ENCODE measurements at regions of chr16 and their contacts with region 1.

Region 1: DNA sequence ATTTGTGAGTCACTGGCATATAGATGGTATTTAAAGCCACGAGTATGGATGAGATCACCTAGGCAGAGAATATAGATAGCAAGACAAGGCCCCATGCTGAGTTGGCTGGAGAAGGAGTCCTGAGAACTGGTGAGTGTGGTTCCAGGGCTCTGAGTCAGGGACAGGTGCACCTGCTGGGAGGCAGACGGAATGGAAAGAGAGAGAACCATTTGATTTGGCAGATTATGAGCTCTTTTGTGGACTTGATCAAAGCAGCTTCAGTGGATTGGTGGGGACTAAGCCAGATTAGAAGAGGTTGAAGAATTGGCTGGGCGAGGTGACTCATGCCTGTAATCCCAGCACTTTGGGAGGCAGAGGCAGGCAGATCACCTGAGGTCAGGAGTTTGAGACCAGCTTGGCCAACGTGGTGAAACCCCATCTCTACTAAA is 4.3 kb upstream of the C16orf92 start:
- H3K4me3 ChIP-seq: no peak overlapping the region
- H3K27ac ChIP-seq: no peak overlapping the region
- H3K4me1 ChIP-seq: no peaks in the 10 kb centered on the region
- CTCF ChIP-seq: no peak

Region 2: DNA sequence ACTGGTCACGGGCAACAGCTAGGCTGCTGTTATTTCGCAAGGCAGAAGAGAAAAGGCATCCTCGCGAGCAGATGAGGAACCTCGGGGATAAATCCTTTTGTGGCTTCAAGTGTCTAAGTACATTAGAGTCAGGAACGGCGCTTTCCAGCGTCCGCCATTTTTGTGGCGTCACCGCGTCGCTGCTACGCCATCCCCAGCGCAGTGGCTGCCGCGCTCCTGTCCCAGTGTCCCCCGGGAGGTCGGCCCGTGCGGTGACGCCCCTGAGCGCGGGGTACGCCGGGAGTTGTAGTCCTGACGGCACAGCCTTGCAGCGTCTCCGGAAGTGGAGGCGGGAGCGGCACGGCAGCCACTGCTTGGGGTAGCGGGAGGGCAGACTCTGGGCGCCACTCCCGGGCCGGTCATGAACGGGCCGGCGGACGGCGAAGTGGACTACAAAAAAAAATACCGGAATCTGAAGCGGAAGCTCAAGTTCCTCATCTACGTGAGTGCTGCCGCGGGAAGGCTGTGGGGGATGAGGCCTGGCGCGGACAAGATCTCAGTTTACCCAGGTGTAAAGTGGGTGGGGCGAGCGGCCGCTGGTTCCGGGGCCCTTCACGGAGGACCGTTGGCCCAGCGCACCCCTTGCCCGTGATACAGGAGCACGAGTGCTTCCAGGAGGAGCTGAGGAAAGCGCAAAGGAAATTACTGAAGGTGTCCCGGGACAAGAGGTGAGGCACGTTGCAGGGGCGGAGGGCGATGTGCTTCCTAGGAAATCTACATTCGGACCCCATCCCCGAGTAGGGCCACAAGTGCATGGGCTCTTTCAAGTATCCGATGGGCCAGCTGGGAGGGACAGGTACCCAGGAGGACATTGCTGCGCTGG is 22.6 kb before region 1 on chr16 and contains the start of gene INO80E:
- CTCF ChIA-PET with region 1: interaction called, 4 read pairs
- POLR2A ChIA-PET with region 1: interaction called, 11 read pairs
- H3K4me3 ChIP-seq: peak within 1 kb of the TSS; percentile 93
- H3K27ac ChIP-seq: peak within 1 kb of the TSS; percentile 91
- H3K4me1 ChIP-seq: no peaks in the 10 kb centered on the region; the same call in 1 of the 2 replicates
- CTCF ChIP-seq: no peak; the same call in 1 of the 2 replicates

Measured in HEK293 (cell line).